Dorsolateral prefrontal cortex (tissue), 120 donors: ENCODE measurements at regions of chr5 and their contacts with region 1.

Region 1: GRCh38 chr5:9207817-9208418 is 338.0 kb downstream of the SEMA5A start:
- DNase-seq: no peak
- H3K4me3 ChIP-seq: no peak overlapping the region
- H3K27ac ChIP-seq: peak overlapping the region in 1 of 59 donors; percentile 53
- H3K27me3 ChIP-seq: no peaks in the 10 kb centered on the region
- CTCF ChIP-seq: peak; percentile 50 to 90 (median 72)

Region 2: GRCh38 chr5:7886849-7887475 is 1321.0 kb before region 1 on chr5:
- intact Hi-C with region 1: loop called in 1 of 2 experiments (anchors 10 kb)
- DNase-seq: no peak
- H3K4me3 ChIP-seq: peak overlapping the region in 2 of 59 donors; percentile 11 to 34
- H3K27ac ChIP-seq: peak overlapping the region in 43 of 59 donors; percentile 1 to 99 (median 67)
- H3K27me3 ChIP-seq: no peaks in the 10 kb centered on the region
- CTCF ChIP-seq: peak; percentile 36 to 91 (median 68)

Region 3: GRCh38 chr5:7927466-7928375 is 1280.2 kb before region 1 on chr5:
- intact Hi-C with region 1: loop called (anchors 5 to 10 kb)
- DNase-seq: peak in 8 of 10 donors; percentile 28 to 60 (median 50)
- H3K4me3 ChIP-seq: no peak overlapping the region
- H3K27ac ChIP-seq: no peak overlapping the region
- H3K27me3 ChIP-seq: peaks cover 0 to 8% (median 0%) of the 10 kb centered on the region in 45 donors
- CTCF ChIP-seq: peak; percentile 23 to 89 (median 77)

Region 4: DNA sequence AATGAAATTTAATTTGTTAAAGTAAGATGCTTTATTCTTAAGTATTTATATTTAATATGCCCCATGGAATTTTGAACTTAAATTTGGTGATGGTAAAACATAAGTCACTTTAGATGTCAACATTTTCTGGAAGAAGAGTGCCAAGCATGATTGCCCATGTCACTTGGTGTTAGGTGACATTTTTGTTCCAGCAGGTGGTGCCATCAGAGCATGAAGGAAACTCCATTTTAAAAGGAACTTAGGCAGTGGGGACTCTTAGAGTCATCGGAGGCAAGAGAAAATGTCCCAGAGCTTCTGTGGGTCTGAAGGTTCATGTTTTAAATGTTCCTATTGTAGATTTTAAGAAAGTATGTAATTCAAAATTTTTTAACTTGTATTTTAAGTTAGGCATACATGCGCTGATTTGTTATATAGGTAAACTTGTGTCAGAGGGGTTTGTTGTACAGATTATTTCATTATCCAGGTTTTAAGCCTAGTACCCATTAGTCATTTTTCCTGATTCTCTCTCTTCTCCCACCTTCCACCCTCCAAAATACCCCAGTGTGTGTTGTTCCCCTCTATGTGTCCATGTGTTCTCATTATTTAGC is 451.3 kb before region 1 on chr5:
- intact Hi-C with region 1: loop called (anchors 5 to 10 kb)
- DNase-seq: peak in 4 of 10 donors; percentile 14 to 72 (median 51)
- H3K4me3 ChIP-seq: no peak overlapping the region
- H3K27ac ChIP-seq: no peak overlapping the region
- H3K27me3 ChIP-seq: no peaks in the 10 kb centered on the region
- CTCF ChIP-seq: peak in 55 of 56 donors; percentile 48 to 91 (median 71)

Region 5: GRCh38 chr5:9156282-9156681 is 51.6 kb before region 1 on chr5:
- intact Hi-C with region 1: loop called (anchors 2 to 5 kb)
- DNase-seq: peak; percentile 15 to 71 (median 52)
- H3K4me3 ChIP-seq: no peak overlapping the region
- H3K27ac ChIP-seq: no peak overlapping the region
- H3K27me3 ChIP-seq: no peaks in the 10 kb centered on the region
- CTCF ChIP-seq: peak in 54 of 56 donors; percentile 30 to 79 (median 60)

Region 6: DNA sequence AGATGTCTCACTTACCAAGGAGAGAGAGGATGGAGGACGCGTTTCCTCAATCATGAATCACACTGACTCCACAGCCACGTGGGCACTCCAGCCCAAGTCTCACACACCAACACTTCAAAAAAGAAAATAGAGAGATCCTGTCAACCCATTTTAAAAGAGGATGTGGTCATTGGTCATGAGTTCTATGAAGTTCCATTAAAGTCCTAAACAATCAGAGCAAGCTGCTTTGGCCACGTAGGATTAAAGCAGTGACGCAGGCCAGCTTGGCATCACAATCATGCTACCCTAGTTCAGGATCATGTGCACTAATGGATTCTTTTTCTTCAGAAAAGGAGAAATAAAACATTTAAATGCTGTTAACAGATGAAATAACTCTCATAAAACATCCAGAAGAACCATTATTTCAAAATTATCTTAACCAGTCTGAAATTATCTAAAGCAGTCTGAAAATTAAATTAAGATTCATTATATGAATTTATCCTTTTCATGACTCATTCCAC is 229.9 kb after region 1 on chr5:
- intact Hi-C with region 1: no loop called
- DNase-seq: peak in 1 of 10 donors; percentile 27
- H3K4me3 ChIP-seq: no peak overlapping the region
- H3K27ac ChIP-seq: no peak overlapping the region
- H3K27me3 ChIP-seq: no peaks in the 10 kb centered on the region
- CTCF ChIP-seq: no peak